ENCODE measurements at regions of chr1 and their contacts with region 1.

Region 1: GRCh38 chr1:74689621-74690363 is 16.2 kb upstream of the ERICH3 start:
- DNase-seq: peak; percentile 87
- ATAC-seq: peak; percentile 23; the same call in 1 of the 2 replicates
- H3K4me3 ChIP-seq: no peak overlapping the region
- H3K27ac ChIP-seq: 0 out of 2 replicates have a peak overlapping the region, but pooled peaks have one; percentile 12
- H3K4me1 ChIP-seq: peaks cover 37% of the 10 kb centered on the region
- H3K27me3 ChIP-seq: no peaks in the 10 kb centered on the region
- CTCF ChIP-seq: peak; percentile 95

Region 2: GRCh38 chr1:73839922-73840321 is 849.9 kb before region 1 on chr1:
- CTCF ChIA-PET with region 1: no interaction called
- POLR2A ChIA-PET with region 1: no interaction called
- intact Hi-C with region 1: loop called (anchors 5 kb)
- DNase-seq: peak; percentile 48
- ATAC-seq: no peak
- H3K4me3 ChIP-seq: no peak overlapping the region
- H3K27ac ChIP-seq: no peak overlapping the region
- H3K4me1 ChIP-seq: no peaks in the 10 kb centered on the region
- H3K27me3 ChIP-seq: no peaks in the 10 kb centered on the region
- CTCF ChIP-seq: peak; percentile 76

Region 3: DNA sequence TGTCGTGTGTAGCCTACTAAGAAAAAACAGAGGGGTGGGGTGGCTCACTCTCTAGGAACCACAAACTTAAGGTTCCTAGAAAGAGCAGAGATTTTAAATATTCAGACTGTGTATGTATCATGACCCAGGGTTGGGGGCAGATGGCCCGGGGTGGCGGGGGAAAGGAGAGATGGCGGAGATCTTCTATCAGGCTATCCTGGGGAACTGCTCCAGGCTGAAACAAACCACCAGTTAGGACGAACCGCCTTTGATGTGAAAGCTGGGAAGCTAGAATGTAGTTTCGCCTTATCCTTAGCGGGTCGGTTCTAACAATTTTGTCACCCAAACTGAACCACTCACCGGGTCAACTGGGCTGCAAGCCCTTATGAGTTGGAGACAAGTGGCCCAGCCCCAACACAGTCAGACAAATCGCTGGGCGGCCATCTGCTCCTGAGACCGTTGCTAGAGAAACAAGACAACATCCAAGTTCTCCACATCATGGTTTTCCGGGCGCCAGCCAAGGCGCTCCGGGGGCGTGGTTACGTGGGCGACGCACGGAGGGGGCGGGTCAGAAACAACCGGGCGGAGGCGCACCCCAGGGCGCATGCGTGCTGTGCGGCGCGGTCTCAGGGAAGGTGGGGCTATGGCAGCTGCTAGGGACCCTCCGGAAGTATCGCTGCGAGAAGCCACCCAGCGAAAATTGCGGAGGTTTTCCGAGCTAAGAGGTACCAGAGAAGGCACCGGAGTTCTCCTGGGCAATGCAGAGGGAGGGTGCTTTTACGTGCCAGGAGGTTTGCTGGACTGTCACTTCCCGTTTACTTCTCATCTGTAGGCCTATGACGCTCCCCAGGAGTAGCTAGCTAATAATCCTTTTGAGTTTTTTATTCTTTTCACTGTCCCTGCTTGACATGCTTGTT is 491.9 kb before region 1 on chr1 and contains the starts of genes FPGT and LRRIQ3:
- CTCF ChIA-PET with region 1: no interaction called
- POLR2A ChIA-PET with region 1: no interaction called
- intact Hi-C with region 1: loop called (anchors 5 kb)
- DNase-seq: peak; percentile 93
- ATAC-seq: peak; percentile 95
- H3K4me3 ChIP-seq: peak within 1 kb of the TSS; percentile 80
- H3K27ac ChIP-seq: peak within 1 kb of the TSS; percentile 7
- H3K4me1 ChIP-seq: peaks cover 12% of the 10 kb centered on the region; the same call in 1 of the 2 replicates
- H3K27me3 ChIP-seq: no peaks in the 10 kb centered on the region
- CTCF ChIP-seq: no peak
- total RNA-seq, gene FPGT: 4.6 and 7.3 TPM in 2 replicates
- total RNA-seq, gene LRRIQ3: 0.23 and 0.95 TPM in 2 replicates

Region 4: GRCh38 chr1:74468982-74469603 is 220.7 kb before region 1 on chr1:
- CTCF ChIA-PET with region 1: no interaction called
- POLR2A ChIA-PET with region 1: no interaction called
- intact Hi-C with region 1: loop called (anchors 5 kb)
- DNase-seq: peak; percentile 76
- ATAC-seq: 0 out of 2 replicates have a peak, but pooled peaks have one; percentile 45
- H3K4me3 ChIP-seq: no peak overlapping the region
- H3K27ac ChIP-seq: no peak overlapping the region
- H3K4me1 ChIP-seq: peaks cover 5% of the 10 kb centered on the region; the same call in 1 of the 2 replicates
- H3K27me3 ChIP-seq: peaks cover 37% of the 10 kb centered on the region
- CTCF ChIP-seq: peak; percentile 82

Region 5: GRCh38 chr1:74504125-74504932 is 185.5 kb before region 1 on chr1:
- CTCF ChIA-PET with region 1: no interaction called
- POLR2A ChIA-PET with region 1: interaction called, 3 read pairs
- intact Hi-C with region 1: loop called (anchors 2 kb)
- DNase-seq: peak; percentile 72
- ATAC-seq: peak; percentile 91
- H3K4me3 ChIP-seq: no peak overlapping the region
- H3K27ac ChIP-seq: no peak overlapping the region
- H3K4me1 ChIP-seq: no peaks in the 10 kb centered on the region
- H3K27me3 ChIP-seq: peaks cover 30% of the 10 kb centered on the region
- CTCF ChIP-seq: peak; percentile 87

Region 6: GRCh38 chr1:74652597-74653139 is 37.1 kb before region 1 on chr1:
- CTCF ChIA-PET with region 1: no interaction called
- POLR2A ChIA-PET with region 1: no interaction called
- intact Hi-C with region 1: loop called (anchors 1 kb)
- DNase-seq: peak; percentile 99
- ATAC-seq: peak; percentile 90
- H3K4me3 ChIP-seq: peak overlapping the region; percentile 18; the same call in 1 of the 2 replicates
- H3K27ac ChIP-seq: peak overlapping the region; percentile 96
- H3K4me1 ChIP-seq: peaks cover 46% of the 10 kb centered on the region
- H3K27me3 ChIP-seq: no peaks in the 10 kb centered on the region
- CTCF ChIP-seq: no peak

Region 7: DNA sequence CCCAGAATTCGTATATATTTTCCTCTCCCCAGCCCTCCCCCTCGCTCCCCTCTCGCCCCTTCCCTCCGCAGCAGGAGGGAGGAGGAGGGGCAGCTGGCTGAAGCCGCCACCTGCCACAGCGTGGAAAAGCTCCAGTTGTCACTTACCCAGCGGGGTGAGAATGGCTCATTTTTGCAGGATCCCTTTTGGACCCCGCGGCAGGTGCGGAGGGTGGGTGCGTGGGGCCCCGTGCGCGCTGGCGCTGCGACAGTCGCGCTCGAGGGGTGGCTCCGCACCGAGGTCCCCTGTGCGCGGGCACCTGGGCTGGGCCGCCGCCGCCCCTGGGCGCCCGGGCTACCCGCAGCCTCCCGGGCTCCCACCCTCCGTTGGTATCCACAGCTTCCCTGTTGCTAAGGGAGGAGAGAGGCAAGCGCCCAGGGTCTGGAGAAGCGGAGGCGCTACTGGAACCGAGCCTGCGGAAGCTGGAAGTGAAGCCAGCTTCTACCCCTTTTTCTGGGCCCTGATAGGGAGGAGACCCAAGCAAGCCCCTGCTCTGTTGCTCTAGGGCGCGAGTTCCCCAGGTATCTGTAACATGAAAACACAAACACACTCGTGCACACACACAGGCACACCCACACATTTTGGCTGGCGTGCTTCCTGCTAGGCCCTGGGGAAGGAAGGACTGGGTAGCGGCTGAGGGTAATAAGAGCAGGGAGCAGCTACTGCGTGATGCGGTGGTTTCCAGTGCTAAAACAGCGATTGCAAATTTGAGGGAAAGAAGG is 16.3 kb before region 1 on chr1 and contains the start of gene ERICH3:
- CTCF ChIA-PET with region 1: no interaction called
- POLR2A ChIA-PET with region 1: no interaction called
- intact Hi-C with region 1: no loop called
- DNase-seq: no peak
- ATAC-seq: no peak
- H3K4me3 ChIP-seq: peak within 1 kb of the TSS; percentile 9; the same call in 1 of the 2 replicates
- H3K27ac ChIP-seq: no peak within 1 kb of the TSS
- H3K4me1 ChIP-seq: no peaks in the 10 kb centered on the region
- H3K27me3 ChIP-seq: no peaks in the 10 kb centered on the region
- CTCF ChIP-seq: no peak
- total RNA-seq, gene ERICH3: not detected in 2 replicates

Region 8: GRCh38 chr1:74733604-74734484 is 44.1 kb after region 1 on chr1:
- CTCF ChIA-PET with region 1: interaction called, 6 read pairs
- POLR2A ChIA-PET with region 1: no interaction called
- intact Hi-C with region 1: loop called (anchors 1 kb)
- DNase-seq: peak; percentile 81
- ATAC-seq: peak; percentile 30
- H3K4me3 ChIP-seq: peak overlapping the region; percentile 81
- H3K27ac ChIP-seq: peak overlapping the region; percentile 81
- H3K4me1 ChIP-seq: peaks cover 34% of the 10 kb centered on the region
- H3K27me3 ChIP-seq: no peaks in the 10 kb centered on the region
- CTCF ChIP-seq: peak; percentile 84

Measured in PC-3 (cell line).